MCF 10A (cell line): ENCODE measurements at regions of chr17 and their contacts with region 1.

Region 1: DNA sequence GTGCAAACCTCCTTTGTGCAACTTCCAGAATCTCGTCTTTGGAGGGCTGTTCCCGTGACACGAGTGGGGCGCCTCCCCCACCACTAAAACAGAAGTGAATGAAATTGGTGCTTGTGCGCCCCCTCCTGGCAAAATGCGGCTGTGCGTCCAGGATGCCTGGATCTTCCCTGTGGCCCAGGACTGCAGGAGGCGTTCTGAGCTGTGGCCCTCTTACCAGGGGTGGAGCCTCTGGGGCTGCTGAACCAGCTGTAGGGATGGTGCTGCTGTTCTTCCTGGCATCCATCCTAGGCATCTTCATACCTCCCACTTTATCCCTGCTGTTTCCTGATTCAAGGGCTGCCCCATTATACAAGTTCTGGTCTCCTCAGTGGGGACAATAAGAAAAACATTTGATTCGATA is 18.5 kb upstream of the NAGLU start:
- DNase-seq: peak; percentile 86
- H3K4me3 Mint-ChIP-seq: no peak overlapping the region
- H3K27ac Mint-ChIP-seq: peak overlapping the region; percentile 98
- H3K4me1 Mint-ChIP-seq: peaks cover 46% of the 10 kb centered on the region
- H3K27me3 Mint-ChIP-seq: no peaks in the 10 kb centered on the region
- CTCF ChIP-seq: peak; percentile 91

Region 2: GRCh38 chr17:42388381-42389134 is 129.0 kb before region 1 on chr17 and contains the start of gene STAT3:
- CTCF ChIA-PET with region 1: interaction called, 4 read pairs
- POLR2A ChIA-PET with region 1: interaction called, 21 read pairs
- intact Hi-C with region 1: no loop called
- DNase-seq: peak; percentile 100
- H3K4me3 Mint-ChIP-seq: peak within 1 kb of the TSS; percentile 90
- H3K27ac Mint-ChIP-seq: peak within 1 kb of the TSS; percentile 97
- H3K4me1 Mint-ChIP-seq: peaks cover 25% of the 10 kb centered on the region
- H3K27me3 Mint-ChIP-seq: no peaks in the 10 kb centered on the region
- CTCF ChIP-seq: no peak
- total RNA-seq, gene STAT3: 89.2 and 115 TPM in 2 replicates

Region 3: GRCh38 chr17:42428141-42428944 is 89.2 kb before region 1 on chr17:
- CTCF ChIA-PET with region 1: interaction called, 4 read pairs
- POLR2A ChIA-PET with region 1: interaction called, 48 read pairs
- intact Hi-C with region 1: loop called (anchors 1 kb)
- DNase-seq: peak; percentile 94
- H3K4me3 Mint-ChIP-seq: no peak overlapping the region
- H3K27ac Mint-ChIP-seq: peak overlapping the region; percentile 73
- H3K4me1 Mint-ChIP-seq: peaks cover 10% of the 10 kb centered on the region
- H3K27me3 Mint-ChIP-seq: no peaks in the 10 kb centered on the region
- CTCF ChIP-seq: peak; percentile 75

Region 4: GRCh38 chr17:42472709-42473521 is 44.6 kb before region 1 on chr17:
- CTCF ChIA-PET with region 1: interaction called, 5 read pairs
- POLR2A ChIA-PET with region 1: interaction called, 14 read pairs
- intact Hi-C with region 1: no loop called
- DNase-seq: peak; percentile 62
- H3K4me3 Mint-ChIP-seq: no peak overlapping the region
- H3K27ac Mint-ChIP-seq: peak overlapping the region; percentile 83
- H3K4me1 Mint-ChIP-seq: peaks cover 13% of the 10 kb centered on the region
- H3K27me3 Mint-ChIP-seq: no peaks in the 10 kb centered on the region
- CTCF ChIP-seq: no peak